Body of pancreas (tissue), 4 donors: ENCODE measurements at regions of chr5 and their contacts with region 1.

Region 1: GRCh38 chr5:79464695-79465332 is 49.1 kb downstream of the HOMER1 start:
- DNase-seq: no peak
- ATAC-seq: no peak
- H3K4me3 ChIP-seq: no peak overlapping the region
- H3K27ac ChIP-seq: no peak overlapping the region
- H3K4me1 ChIP-seq: no peaks in the 10 kb centered on the region
- H3K27me3 ChIP-seq: no peaks in the 10 kb centered on the region
- CTCF ChIP-seq: peak; percentile 19 to 72 (median 64)
- POLR2A ChIP-seq: no peak

Region 2: DNA sequence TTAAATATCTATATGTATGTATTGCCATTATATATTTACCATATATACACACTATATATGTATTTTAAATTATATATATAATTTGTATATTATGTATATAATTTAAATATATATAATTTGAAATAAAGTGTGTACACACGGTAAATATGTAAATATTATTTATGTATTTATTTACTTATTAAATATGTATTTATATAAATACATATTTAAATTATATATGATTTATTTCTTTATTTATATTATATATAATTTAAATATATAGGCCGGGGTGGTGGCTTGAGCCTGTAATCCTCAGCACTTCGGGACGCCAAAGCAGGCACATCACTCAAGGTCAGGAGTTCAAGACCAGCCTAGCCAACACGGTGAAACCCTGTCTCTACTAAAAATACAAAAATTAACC is 784.9 kb before region 1 on chr5:
- intact Hi-C with region 1: no loop called
- DNase-seq: no peak
- ATAC-seq: no peak
- H3K4me3 ChIP-seq: no peak overlapping the region
- H3K27ac ChIP-seq: no peak overlapping the region
- H3K4me1 ChIP-seq: no peaks in the 10 kb centered on the region
- H3K27me3 ChIP-seq: no peaks in the 10 kb centered on the region
- CTCF ChIP-seq: no peak
- POLR2A ChIP-seq: no peak

Region 3: DNA sequence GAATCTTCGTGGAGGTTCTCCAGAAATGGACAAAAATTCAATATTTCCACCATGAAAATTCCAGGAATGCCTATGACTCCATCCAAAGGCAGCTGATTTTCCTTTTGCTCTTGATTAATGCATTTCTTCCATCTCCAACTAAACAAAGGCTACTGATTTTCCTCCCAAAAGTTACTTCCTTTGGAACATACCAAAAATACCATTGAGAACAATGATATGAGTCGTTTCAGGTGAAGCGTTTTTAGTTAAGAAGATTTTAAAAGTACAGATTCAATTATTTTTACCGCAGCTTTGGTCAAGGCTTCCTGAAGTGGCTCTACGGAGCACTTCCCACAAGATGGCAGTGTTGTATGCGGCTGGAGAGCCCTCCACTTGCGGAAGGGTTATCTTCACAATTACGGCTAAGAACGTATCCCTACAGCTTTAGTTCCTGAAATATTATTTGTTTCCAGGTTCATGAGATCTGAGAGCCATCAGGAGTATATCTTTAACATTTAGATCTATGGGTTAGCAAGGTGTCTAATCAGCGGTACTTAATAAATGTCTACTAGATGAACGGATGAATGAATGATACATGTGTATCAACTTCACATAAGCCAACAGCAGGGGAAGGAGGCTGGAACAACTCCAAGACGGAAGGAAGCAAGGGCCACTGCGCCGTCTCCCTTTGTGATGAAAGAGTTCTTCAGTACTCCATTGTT is 443.8 kb before region 1 on chr5:
- intact Hi-C with region 1: loop called (anchors 5 kb)
- DNase-seq: peak; percentile 60 to 68 (median 64)
- ATAC-seq: peak; percentile 81
- H3K4me3 ChIP-seq: no peak overlapping the region
- H3K27ac ChIP-seq: no peak overlapping the region
- H3K4me1 ChIP-seq: peaks cover 14% of the 10 kb centered on the region
- H3K27me3 ChIP-seq: no peaks in the 10 kb centered on the region
- CTCF ChIP-seq: peak; percentile 63 to 76 (median 71)
- POLR2A ChIP-seq: no peak

Region 4: DNA sequence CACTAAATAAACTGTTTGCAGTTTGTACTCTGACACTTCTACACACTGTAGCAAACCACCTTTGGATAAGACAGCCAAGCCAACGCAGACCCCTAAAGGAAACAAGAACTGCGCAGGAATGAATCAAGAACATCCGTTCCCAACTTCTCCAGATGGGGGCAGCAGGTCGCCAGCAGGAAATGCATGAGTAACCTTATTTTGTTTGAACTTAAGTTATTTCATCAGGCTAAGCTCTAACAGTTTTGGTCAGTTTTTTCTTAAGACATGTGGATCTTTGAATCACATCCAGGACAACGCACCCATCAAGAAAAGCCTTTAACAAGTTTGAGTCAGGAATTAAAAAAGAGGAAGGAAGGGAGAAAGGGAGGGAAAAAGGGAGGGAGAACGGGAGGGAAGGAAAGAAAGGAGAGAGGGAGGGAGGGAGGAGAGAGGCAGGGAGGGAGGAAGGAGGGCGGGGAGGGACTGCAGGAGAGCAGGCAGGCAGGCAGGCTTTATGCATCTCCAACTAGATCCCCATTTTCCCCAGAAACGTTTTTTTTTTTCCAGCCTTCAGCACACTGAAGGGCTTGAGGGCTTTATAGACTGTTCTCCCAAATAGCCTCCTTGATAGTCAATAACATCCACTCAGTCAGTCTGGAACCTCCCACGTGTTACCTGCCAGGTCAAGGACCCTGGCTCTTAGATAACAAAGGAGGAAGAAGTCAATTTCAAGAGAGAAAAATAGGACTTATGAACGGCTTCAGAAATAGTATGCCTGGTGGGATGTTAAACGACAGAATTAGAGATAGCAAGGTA is 331.0 kb before region 1 on chr5:
- intact Hi-C with region 1: loop called (anchors 10 kb)
- DNase-seq: peak; percentile 71 to 83 (median 72)
- ATAC-seq: peak; percentile 89
- H3K4me3 ChIP-seq: no peak overlapping the region
- H3K27ac ChIP-seq: peak overlapping the region in 3 of 4 donors; percentile 14 to 39 (median 31)
- H3K4me1 ChIP-seq: peaks cover 13% of the 10 kb centered on the region
- H3K27me3 ChIP-seq: no peaks in the 10 kb centered on the region
- CTCF ChIP-seq: peak; percentile 52 to 76 (median 74)
- POLR2A ChIP-seq: no peak

Region 5: DNA sequence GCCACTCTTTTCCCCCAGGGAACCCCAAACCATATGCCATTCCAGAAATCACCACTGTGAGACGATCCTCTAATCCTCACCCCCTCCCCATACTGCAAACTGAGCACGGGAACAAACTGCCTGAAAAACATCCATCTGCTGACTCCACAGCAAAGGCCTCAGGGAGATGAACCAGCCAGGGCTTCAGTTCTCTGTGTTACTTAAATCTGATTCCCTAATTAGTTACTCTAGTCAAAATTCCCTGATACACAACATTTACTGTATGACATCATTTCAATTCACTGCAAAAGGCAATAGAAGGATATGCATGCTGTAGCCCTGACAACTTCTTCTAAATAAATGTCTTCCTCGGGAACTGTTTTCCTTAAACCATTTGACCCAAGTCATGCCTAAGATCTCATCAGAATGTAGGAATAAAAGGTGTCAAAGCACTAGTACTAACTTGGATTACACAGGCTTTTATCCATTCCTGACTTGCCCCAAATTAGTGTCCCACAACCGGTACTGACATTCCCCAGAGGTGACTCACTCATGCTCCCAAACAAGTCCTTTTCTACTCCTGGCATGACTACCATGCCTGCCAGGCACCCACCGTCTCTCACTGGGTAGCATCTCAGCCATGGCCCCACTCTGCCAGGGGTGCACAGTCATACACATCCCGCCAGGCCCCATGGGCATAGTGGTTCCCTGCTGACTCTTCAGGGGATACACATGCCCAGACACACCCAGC is 491.3 kb after region 1 on chr5:
- intact Hi-C with region 1: no loop called
- DNase-seq: no peak
- ATAC-seq: no peak
- H3K4me3 ChIP-seq: no peak overlapping the region
- H3K27ac ChIP-seq: no peak overlapping the region
- H3K4me1 ChIP-seq: no peaks in the 10 kb centered on the region
- H3K27me3 ChIP-seq: no peaks in the 10 kb centered on the region
- CTCF ChIP-seq: no peak
- POLR2A ChIP-seq: no peak